Mammary epithelial cell (primary cell): ENCODE measurements at regions of chr1 and their contacts with region 1.

Region 1: GRCh38 chr1:172826096-172826743 is 167.3 kb downstream of the FASLG start:
- DNase-seq: peak; percentile 68
- H3K4me3 ChIP-seq: no peak overlapping the region
- H3K27ac ChIP-seq: no peak overlapping the region
- H3K4me1 ChIP-seq: peaks cover 5% of the 10 kb centered on the region
- H3K27me3 ChIP-seq: no peaks in the 10 kb centered on the region
- CTCF ChIP-seq: peak; percentile 56 to 73

Region 2: GRCh38 chr1:172928412-172928811 is 102.2 kb after region 1 on chr1:
- CTCF ChIA-PET with region 1: no interaction called
- dilution Hi-C with region 1: no loop called
- in situ Hi-C with region 1: no loop called
- intact Hi-C with region 1: loop called (anchors 5 kb)
- DNase-seq: peak; percentile 91
- H3K4me3 ChIP-seq: no peak overlapping the region
- H3K27ac ChIP-seq: peak overlapping the region; percentile 82
- H3K4me1 ChIP-seq: peaks cover 30% of the 10 kb centered on the region
- H3K27me3 ChIP-seq: no peaks in the 10 kb centered on the region
- CTCF ChIP-seq: no peak

Region 3: DNA sequence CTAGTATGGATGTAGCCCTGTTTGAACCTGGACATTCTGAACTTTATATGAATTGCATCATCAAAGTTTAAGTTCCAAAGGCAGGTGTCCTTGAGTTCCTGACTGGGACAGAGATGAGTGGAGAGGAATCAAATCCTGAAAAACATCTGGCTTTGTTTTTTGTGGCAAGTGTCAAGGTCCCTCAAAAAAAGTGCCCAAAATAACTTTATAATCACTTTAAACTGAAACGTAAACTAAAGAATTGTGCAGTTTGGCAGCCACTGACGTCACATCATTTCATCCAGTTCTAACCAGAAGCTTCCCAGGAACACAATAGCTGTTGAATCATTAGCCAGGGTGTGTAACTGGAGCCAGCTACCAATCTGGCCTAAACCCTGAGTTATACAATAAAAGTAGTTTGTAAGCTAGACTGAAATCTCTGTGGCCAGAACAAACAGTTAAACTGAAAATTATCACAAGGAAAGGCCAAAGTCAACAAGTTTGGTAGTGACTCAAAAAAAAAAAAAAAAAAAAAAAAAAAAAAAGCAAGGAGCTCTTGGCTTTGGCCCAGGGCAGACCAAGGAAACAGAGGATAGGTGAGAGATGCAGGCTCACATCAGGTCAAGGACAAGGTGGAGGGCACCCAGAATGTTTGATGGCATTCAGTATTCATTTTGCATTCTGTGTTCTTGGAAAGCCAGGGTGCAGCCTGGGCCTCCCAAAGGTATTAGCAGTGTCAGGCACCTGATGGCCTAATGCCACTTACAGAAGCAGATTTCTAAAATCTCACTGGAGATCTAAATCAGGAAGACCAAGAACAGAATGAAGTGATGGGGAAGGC is 150.2 kb after region 1 on chr1:
- CTCF ChIA-PET with region 1: no interaction called
- dilution Hi-C with region 1: no loop called
- in situ Hi-C with region 1: no loop called
- intact Hi-C with region 1: loop called (anchors 2 kb)
- DNase-seq: peak; percentile 94
- H3K4me3 ChIP-seq: no peak overlapping the region
- H3K27ac ChIP-seq: peak overlapping the region; percentile 61
- H3K4me1 ChIP-seq: peaks cover 29% of the 10 kb centered on the region
- H3K27me3 ChIP-seq: no peaks in the 10 kb centered on the region
- CTCF ChIP-seq: no peak

Region 4: GRCh38 chr1:173048621-173049321 is 222.6 kb after region 1 on chr1:
- CTCF ChIA-PET with region 1: no interaction called
- dilution Hi-C with region 1: no loop called
- in situ Hi-C with region 1: no loop called
- intact Hi-C with region 1: loop called (anchors 1 kb)
- DNase-seq: peak; percentile 62
- H3K4me3 ChIP-seq: no peak overlapping the region
- H3K27ac ChIP-seq: no peak overlapping the region
- H3K4me1 ChIP-seq: peaks cover 43% of the 10 kb centered on the region
- H3K27me3 ChIP-seq: no peaks in the 10 kb centered on the region
- CTCF ChIP-seq: no peak

Region 5: DNA sequence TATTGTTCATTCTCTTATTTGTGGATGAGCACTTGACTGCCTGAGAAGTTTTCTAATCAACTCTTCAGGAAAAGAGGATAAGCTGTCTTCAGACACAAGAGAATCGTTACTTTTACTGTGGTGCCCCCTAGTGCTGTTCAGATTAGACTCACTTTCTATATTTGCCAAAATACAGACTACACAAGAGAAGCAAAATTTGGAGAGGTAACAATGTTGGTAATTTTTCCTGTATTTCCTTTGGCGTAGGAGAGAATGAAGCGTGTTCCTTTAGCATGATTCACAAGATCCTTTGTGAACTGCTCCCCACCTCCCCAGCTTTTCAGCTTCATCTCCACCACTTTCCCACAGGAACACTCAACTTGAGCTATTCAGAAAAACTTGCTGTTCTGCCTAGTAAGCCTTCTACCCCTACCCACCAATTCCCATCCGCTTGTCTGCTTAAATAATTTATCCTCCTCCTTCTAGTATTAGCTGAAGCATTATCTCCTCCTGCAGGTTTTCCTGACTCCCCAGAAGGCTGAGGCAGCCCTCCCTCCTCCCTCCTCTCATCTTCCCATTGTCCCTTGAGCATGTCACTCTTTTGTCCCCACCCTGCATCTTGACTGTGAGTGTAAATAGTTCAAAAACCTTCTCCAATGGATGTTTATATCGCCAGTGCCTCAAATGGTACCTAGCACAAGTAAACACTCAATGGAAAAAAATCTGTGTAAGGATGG is 376.4 kb after region 1 on chr1:
- CTCF ChIA-PET with region 1: interaction called, 7 read pairs
- dilution Hi-C with region 1: loop called (anchors 5 kb)
- in situ Hi-C with region 1: no loop called
- intact Hi-C with region 1: loop called (anchors 1 kb)
- DNase-seq: peak; percentile 66
- H3K4me3 ChIP-seq: no peak overlapping the region
- H3K27ac ChIP-seq: no peak overlapping the region
- H3K4me1 ChIP-seq: peaks cover 12% of the 10 kb centered on the region
- H3K27me3 ChIP-seq: no peaks in the 10 kb centered on the region
- CTCF ChIP-seq: peak; percentile 58 to 70